Mammary epithelial cell (primary cell): ENCODE measurements at regions of chr1 and their contacts with region 1.

Region 1: DNA sequence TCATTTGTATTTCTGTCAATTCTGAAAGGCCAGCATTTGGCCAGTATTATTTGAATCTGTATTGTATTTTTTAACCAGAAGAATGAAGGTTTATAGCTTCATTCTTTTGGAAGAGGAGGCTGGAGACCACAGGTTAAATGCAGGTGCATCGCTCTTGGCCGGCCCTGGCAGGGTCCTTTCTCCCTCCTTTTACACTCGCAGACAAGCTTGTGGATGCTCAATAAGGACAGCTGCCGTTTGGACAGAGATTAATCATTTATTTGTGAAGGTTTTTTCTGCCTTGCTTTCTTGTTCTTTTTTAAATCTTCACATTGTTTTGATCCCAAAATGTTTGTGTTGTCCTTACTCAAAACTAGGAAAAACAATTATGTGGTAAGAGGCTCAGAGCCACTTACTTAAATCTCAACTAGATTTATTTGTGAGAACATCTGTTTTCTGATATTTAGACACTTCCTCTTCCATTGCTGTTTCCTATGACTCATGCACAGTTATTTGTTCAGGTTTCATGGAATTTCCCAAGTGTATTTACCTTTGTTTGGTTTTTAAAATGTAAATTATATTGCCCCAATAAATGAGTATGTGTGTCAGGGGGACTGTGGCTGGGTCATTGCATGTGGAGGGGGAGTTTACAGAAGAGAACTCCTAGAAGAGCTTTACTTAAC is 46.7 kb upstream of the LAMC2 start:
- DNase-seq: peak; percentile 84
- H3K4me3 ChIP-seq: no peak overlapping the region
- H3K27ac ChIP-seq: peak overlapping the region; percentile 79
- H3K4me1 ChIP-seq: peaks cover 30% of the 10 kb centered on the region
- H3K27me3 ChIP-seq: no peaks in the 10 kb centered on the region
- CTCF ChIP-seq: no peak

Region 2: GRCh38 chr1:183159960-183160359 is 20.5 kb after region 1 on chr1:
- CTCF ChIA-PET with region 1: no interaction called
- dilution Hi-C with region 1: no loop called
- in situ Hi-C with region 1: no loop called
- intact Hi-C with region 1: loop called (anchors 2 kb)
- DNase-seq: peak; percentile 100
- H3K4me3 ChIP-seq: no peak overlapping the region
- H3K27ac ChIP-seq: peak overlapping the region; percentile 90
- H3K4me1 ChIP-seq: peaks cover 47% of the 10 kb centered on the region
- H3K27me3 ChIP-seq: no peaks in the 10 kb centered on the region
- CTCF ChIP-seq: no peak

Region 3: DNA sequence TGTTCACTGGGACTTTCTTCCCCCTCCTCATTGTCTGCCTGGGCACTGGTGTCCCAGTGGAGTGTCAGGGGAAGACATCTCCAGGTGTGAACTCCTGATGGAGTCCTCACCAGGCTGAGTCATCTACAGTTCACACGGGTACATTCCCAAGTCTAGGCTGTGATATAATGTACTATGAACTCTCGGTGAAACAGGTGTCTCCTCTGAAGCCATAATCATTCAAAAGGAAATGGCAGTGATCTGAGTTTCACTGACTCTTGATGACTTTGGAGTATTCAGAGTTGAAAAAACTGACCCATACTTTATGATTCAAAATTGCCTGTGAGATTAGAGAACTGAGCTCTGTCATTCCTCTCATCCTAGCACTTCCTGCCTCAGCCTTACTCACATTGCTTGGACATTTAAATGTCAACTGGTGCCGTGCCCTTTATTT is 55.7 kb after region 1 on chr1:
- CTCF ChIA-PET with region 1: no interaction called
- dilution Hi-C with region 1: loop called (anchors 5 kb)
- in situ Hi-C with region 1: loop called in 1 of 2 experiments (anchors 5 kb)
- intact Hi-C with region 1: no loop called
- DNase-seq: peak; percentile 80
- H3K4me3 ChIP-seq: no peak overlapping the region
- H3K27ac ChIP-seq: peak overlapping the region; percentile 68
- H3K4me1 ChIP-seq: peaks cover 65% of the 10 kb centered on the region
- H3K27me3 ChIP-seq: no peaks in the 10 kb centered on the region
- CTCF ChIP-seq: no peak